Activated CD8-positive, alpha-beta T cell treated with anti-CD3 and anti-CD28 coated beads, Interleukin-2, amount 10 ng/mL, durations not matched to agents 7 days and 5 days (primary cell): ENCODE measurements at regions of chr1 and their contacts with region 1.

Region 1: DNA sequence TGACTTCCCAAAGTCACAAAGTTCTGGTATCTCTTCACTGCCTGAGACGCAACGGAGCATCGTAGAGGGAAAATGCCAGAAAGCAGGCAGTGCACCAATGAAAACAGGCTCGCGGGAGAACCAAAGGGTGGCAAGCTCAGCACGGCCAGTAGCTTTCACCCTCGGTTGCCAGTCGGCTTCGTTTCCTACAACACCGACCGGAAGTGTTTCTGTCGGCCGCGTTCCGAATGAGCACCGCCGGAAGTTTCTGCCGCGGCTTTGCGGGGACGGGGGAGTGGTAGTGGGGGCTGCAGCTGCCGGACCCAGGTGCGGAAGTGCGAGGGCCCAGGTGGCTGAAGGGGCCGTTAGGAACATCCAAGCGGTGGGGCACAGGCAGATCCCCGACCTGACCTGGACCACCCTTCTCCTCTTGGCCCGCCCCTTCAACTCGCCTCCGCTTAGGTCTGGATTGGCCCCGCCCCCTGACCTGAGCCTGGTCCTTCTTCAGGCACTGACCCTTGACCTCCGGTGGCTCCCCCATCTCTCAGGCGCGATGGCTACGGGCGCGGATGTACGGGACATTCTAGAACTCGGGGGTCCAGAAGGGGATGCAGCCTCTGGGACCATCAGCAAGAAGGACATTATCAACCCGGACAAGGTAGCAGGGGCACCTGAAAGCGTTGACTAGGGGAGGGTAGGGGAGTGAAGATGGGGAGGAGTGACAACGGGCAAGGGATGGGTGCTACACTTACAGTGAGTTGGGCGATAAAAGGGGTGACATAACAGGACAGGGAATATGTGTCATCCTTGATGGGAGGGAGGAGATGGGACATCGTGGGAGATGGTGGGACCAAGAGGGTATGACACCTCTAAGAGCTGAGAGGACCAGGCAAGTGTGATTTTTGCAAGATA is at the start of gene DMAP1:
- DNase-seq: peak; percentile 88
- ATAC-seq: peak; percentile 88
- H3K4me3 Mint-ChIP-seq: peak within 1 kb of the TSS; percentile 95
- H3K27ac Mint-ChIP-seq: peak within 1 kb of the TSS; percentile 92
- H3K4me1 Mint-ChIP-seq: peaks cover 27% of the 10 kb centered on the region
- H3K27me3 Mint-ChIP-seq: peaks cover 4% of the 10 kb centered on the region
- total RNA-seq, gene DMAP1: 33.3 to 34.9 TPM

Region 2: DNA sequence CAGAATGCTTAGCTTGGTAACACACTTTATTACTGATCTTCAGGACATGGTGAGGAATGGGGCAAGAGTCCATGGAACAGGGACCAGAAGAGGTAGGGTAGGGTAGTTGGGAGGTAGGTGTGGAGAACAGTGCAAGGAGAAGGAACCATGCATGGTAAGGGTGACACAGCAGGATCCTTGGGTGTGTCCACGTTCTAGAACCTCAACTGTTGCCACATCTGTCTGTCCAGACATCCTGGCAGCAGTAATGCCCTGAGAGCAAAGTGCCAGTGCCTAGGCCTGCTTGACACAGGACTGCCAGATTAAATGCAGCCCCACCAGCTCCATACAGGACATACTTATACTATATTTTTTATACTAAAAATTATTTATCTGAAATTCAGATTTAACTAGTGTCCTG is 13.7 kb after region 1 on chr1:
- CTCF ChIA-PET with region 1: interaction called, 16 read pairs
- POLR2A ChIA-PET with region 1: interaction called, 3 read pairs
- DNase-seq: no peak
- ATAC-seq: no peak
- H3K4me3 Mint-ChIP-seq: no peak overlapping the region
- H3K27ac Mint-ChIP-seq: no peak overlapping the region
- H3K4me1 Mint-ChIP-seq: peaks cover 7% of the 10 kb centered on the region
- H3K27me3 Mint-ChIP-seq: no peaks in the 10 kb centered on the region

Region 3: DNA sequence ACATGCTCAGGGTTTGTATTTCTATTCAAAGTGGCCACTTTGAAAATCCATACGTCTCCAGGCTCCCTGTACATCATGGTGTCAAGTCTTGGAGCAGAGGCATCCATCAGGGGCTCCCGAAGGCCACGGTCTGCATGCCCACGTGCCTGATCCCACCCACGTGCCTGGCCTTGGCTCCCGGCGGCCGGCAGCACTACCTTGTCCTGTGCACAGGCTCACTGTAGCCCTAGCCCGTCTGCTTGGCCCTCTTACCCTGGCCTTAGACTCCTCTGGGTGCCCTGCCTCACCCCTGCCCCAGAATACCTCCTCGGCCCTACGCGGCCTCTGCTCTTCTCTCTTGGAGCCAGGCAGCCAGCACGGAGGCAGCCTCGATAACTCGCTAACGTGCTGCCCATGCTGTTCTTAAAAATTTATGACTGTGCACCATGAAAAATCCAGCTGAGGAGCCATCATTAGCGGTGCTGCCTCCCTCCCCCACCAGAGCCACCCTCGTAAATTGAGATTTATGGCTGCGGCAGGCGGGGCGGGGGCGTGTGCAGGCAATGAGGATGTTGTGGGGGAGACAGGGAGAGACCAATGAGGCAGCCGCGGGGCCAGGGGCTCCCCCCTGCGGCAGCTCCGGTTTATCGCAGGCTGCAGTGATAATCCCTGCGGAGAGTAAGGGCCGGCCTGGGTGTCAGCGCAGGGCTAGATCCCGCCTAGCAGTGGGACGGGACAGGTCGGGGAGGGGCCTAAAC is 24.4 kb after region 1 on chr1:
- CTCF ChIA-PET with region 1: interaction called, 25 read pairs
- POLR2A ChIA-PET with region 1: no interaction called
- DNase-seq: peak; percentile 65
- ATAC-seq: peak; percentile 89
- H3K4me3 Mint-ChIP-seq: no peak overlapping the region
- H3K27ac Mint-ChIP-seq: no peak overlapping the region
- H3K4me1 Mint-ChIP-seq: peaks cover 5% of the 10 kb centered on the region
- H3K27me3 Mint-ChIP-seq: no peaks in the 10 kb centered on the region

Region 4: DNA sequence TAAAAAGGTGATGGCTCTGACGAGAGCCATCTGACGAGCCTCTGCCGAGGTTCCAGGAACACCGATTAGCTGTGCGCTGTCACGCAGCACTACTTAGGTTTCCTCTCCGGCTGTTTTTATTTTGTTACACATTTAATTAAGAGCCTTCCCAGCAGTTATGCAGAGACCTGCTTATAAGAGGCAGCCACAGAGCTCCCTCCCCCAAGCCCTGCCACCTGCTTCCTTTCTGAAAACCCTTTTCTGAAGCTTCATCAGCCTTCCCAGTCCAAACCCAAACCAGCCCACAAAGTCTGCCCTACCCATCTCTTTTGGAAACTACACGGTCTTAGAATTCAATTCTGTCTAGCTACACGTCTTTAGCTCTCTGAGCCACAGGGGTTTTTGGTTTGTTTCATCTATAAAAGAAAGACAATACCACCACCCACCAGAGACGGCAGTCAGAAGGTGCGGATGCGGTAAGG is 92.5 kb after region 1 on chr1:
- CTCF ChIA-PET with region 1: interaction called, 12 read pairs
- POLR2A ChIA-PET with region 1: interaction called, 5 read pairs
- DNase-seq: peak; percentile 69
- ATAC-seq: peak; percentile 92
- H3K4me3 Mint-ChIP-seq: peak overlapping the region; percentile 42
- H3K27ac Mint-ChIP-seq: peak overlapping the region; percentile 83
- H3K4me1 Mint-ChIP-seq: peaks cover 47% of the 10 kb centered on the region
- H3K27me3 Mint-ChIP-seq: no peaks in the 10 kb centered on the region

Region 5: GRCh38 chr1:44318097-44319088 is 104.9 kb after region 1 on chr1:
- CTCF ChIA-PET with region 1: interaction called, 18 read pairs
- POLR2A ChIA-PET with region 1: interaction called, 5 read pairs
- DNase-seq: peak; percentile 65
- ATAC-seq: peak; percentile 42
- H3K4me3 Mint-ChIP-seq: no peak overlapping the region
- H3K27ac Mint-ChIP-seq: no peak overlapping the region
- H3K4me1 Mint-ChIP-seq: peaks cover 3% of the 10 kb centered on the region
- H3K27me3 Mint-ChIP-seq: no peaks in the 10 kb centered on the region

Region 6: GRCh38 chr1:44354268-44354839 is 140.9 kb after region 1 on chr1:
- CTCF ChIA-PET with region 1: interaction called, 11 read pairs
- POLR2A ChIA-PET with region 1: no interaction called
- DNase-seq: no peak
- ATAC-seq: no peak
- H3K4me3 Mint-ChIP-seq: peak overlapping the region; percentile 86
- H3K27ac Mint-ChIP-seq: peak overlapping the region; percentile 78
- H3K4me1 Mint-ChIP-seq: peaks cover 29% of the 10 kb centered on the region
- H3K27me3 Mint-ChIP-seq: no peaks in the 10 kb centered on the region